Sigmoid colon (tissue), 7 donors: ENCODE measurements at regions of chr2 and their contacts with region 1.

Region 1: DNA sequence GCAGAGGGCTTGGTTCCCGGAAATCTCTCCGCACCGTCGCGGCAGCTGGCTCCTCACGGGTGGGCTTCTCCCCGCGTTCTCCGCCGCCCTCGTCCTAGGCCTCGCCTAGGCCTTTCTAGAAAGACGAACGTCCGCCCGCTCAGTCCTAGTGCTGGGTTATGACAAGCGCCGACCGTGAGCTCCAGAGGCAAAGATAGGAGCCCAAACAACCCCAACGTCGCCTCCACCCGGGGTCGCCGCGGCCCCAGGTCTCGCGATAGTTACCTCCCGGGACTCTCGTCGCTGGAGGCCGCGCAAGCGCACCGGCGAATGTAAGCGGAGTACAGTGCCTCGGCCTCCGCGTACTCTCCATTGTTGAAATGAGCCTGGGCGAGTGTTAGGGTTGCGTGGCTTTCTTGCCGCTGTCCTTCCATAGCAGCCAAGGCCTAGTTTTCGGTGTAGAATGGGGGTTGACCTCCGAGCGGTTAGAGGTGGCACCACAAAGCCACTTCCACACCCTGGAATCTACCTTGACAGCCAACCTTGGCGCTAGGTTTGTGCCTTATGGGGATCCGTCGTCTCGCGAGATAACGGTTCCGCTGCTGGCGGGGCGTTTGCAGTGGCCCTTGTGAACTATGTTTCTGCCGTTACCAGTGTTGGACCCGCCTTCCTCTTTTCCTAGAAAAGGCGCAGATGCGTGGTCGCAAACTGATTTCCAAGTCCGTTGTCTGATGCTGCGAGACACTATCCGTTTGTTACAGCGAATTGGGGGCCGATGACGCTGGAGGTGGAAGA is at the start of gene TTC32:
- DNase-seq: peak; percentile 97
- H3K4me3 ChIP-seq: peak within 1 kb of the TSS; percentile 70 to 98 (median 78)
- H3K27ac ChIP-seq: peak within 1 kb of the TSS; percentile 88 to 95 (median 94)
- H3K4me1 ChIP-seq: peaks cover 0 to 45% (median 42%) of the 10 kb centered on the region in 4 donors
- H3K27me3 ChIP-seq: no peaks in the 10 kb centered on the region
- CTCF ChIP-seq: no peak
- EP300 ChIP-seq: no peak
- POLR2A ChIP-seq: peak; percentile 77 to 82
- total RNA-seq, gene TTC32: 7.3 to 20.5 (median 12.8) TPM

Region 2: DNA sequence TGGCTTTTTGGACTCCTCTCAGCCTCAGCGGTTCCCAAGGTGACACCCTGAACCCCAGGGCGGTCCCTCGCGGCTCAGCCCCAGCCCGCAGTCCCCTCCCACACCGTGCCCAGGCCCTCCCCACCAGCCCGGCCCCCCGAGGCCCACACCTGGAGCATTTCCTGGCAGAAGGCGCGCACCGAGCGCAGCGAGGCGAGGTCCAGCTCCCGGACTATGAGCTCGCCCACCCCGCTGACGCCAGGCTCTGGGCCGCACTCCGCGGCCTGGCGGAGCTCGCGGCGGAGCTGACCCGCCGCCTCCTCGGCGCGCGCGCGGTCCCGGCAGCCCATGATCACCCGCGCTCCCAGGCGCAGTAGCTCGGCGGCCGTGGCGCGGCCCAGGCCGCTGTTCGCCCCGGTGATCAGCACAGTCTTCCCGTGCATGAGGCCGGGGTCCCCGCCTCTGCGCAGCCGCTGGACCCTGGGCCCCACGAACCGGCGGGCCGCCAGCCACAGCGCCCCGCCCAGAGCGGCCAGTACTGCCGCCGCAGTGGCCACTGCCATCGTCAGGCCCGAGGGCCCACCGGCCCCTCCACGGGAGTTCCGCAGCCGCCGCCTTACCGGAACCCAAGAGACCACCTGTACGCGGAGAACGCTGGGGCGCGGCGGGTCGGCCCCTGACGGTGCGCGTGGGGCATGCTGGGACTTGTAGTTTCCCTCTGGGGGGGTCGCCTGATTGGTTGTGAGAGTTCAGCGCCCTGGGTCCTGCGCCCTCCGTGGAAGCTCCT is 1341.4 kb before region 1 on chr2 and contains the start of gene RDH14:
- intact Hi-C with region 1: loop called (anchors 10 kb)
- DNase-seq: peak; percentile 98
- H3K4me3 ChIP-seq: peak within 1 kb of the TSS; percentile 73 to 88 (median 78)
- H3K27ac ChIP-seq: peak within 1 kb of the TSS; percentile 95 to 99 (median 96)
- H3K4me1 ChIP-seq: peaks cover 0 to 32% (median 21%) of the 10 kb centered on the region in 4 donors
- H3K27me3 ChIP-seq: no peaks in the 10 kb centered on the region
- CTCF ChIP-seq: no peak
- EP300 ChIP-seq: no peak
- POLR2A ChIP-seq: peak; percentile 42 to 53
- total RNA-seq, gene RDH14: 37.5 to 45.7 (median 39.9) TPM

Region 3: DNA sequence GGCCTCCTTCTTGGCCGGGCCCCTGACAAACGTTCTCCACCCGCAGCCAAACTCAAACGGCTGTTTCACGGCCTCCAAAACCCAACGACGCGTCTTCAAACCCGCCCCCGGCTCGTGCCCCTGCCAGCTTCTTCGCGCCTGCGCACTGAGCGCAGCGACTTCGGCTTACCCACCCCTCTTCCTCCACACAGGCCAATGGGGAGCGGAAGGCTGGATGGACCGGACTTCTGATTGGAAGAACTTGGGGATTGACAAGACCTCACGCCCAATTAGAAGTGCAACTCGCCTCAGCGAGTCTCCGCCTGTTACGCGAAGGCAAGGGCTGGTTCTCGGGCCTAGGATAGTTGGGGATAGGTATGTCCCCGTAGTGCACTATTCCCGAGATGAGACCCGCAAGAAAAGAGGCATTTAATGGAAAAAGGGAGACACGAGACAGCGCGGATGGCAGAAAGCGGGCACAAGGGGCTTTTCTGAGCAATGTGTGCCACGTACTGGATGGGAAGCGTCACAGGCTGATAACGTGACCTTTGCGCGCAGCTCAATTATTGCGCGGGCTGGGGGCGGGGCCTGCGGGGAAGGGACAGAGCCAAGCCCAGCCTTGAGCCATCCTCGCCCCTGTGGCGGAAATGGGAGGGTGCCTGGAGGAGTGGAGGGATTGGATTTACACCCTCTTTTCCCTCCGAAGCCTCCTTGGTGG is 150.1 kb after region 1 on chr2 and contains the start of gene LAPTM4A:
- intact Hi-C with region 1: loop called (anchors 5 kb)
- DNase-seq: peak; percentile 100
- H3K4me3 ChIP-seq: peak within 1 kb of the TSS; percentile 55 to 91 (median 82)
- H3K27ac ChIP-seq: peak within 1 kb of the TSS; percentile 95 to 99 (median 98)
- H3K4me1 ChIP-seq: peaks cover 0 to 37% (median 26%) of the 10 kb centered on the region in 4 donors
- H3K27me3 ChIP-seq: no peaks in the 10 kb centered on the region
- CTCF ChIP-seq: peak in 1 of 4 experiments; percentile 44
- EP300 ChIP-seq: peak in 1 of 4 donors; percentile 61
- POLR2A ChIP-seq: peak; percentile 91 to 98
- total RNA-seq, gene LAPTM4A: 181 to 246 (median 227) TPM